Left colon (tissue), 2 donors: ENCODE measurements at regions of chr16 and their contacts with region 1.

Region 1: GRCh38 chr16:87874639-87875465 is 5.5 kb upstream of the SLC7A5 start:
- DNase-seq: no peak
- ATAC-seq: no peak

Region 2: DNA sequence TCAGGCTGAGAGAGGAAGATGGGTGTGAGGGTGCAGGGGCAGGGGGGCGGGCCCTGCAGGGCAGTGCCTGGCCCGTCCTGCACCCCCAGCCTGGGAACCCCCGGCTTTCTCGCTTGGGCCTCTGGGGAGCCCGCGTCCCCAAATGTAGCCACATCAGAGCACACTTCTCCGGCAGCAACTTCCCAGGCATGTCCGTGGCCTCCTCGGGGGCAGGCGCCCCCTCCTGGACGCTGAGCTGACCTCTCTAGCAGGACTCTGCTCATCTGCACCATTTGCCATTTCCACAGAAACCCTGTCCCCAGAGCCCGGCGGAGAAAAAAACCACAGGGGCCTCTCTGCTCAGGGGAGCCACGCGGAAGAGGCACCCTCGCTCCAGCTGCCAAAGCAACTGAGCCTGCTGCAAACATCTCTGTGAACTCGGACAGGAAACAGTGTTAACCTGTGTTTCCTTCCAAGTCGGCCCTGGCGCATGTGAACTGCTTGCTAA is 172.5 kb before region 1 on chr16:
- intact Hi-C with region 1: no loop called
- DNase-seq: peak in 1 of 2 donors; percentile 44
- ATAC-seq: no peak

Region 3: DNA sequence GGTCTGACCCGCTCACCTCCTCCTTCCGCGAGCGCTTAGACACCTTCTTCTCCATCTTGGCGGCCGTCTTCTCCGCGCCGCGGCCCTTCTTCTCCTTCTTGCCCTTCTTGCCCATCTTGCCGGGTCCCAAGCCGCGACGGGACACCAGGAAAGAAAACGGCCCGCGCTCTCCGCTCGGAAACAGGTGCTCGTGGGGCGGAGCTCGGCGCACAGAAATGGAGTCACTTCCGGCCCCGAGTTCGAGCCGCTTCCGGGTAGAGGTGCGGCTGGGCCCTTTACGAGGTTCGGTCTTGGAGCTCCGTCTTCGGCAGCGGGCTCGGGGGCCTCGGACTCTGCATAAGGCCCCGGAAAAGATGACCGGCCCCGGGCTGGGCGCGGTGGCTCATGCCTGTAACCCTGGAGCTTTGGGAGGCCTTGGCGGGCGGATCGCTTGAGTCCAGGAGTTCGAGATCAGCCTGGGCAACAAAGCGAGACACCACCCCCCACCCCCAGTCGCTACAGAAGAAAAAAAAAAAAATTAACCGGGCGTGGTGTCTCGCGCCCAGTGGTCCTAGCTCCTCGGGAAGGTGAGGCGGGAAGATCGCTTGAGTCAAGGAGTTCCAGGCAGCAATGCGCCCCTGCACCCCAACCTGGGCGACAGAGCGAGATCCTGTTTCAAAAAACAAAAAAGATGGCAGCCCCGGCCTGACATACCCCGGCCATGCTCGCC is 108.9 kb before region 1 on chr16 and contains the start of gene KLHDC4:
- intact Hi-C with region 1: no loop called
- DNase-seq: peak; percentile 88 to 94
- ATAC-seq: peak; percentile 92
- total RNA-seq, gene KLHDC4: 28.7 to 118 TPM

Region 4: GRCh38 chr16:87778830-87779579 is 95.8 kb before region 1 on chr16:
- intact Hi-C with region 1: loop called in 1 of 2 experiments (anchors 2 kb)
- DNase-seq: peak; percentile 86 to 91
- ATAC-seq: peak; percentile 88

Region 5: GRCh38 chr16:87834623-87835407 is 40.0 kb before region 1 on chr16:
- intact Hi-C with region 1: no loop called
- DNase-seq: peak in 1 of 2 donors; percentile 52
- ATAC-seq: peak; percentile 29